T-cell (primary cell): ENCODE measurements at regions of chr2 and their contacts with region 1.

Region 1: GRCh38 chr2:25419678-25420242 is 78.0 kb upstream of the DNMT3A start:
- DNase-seq: peak in 1 of 35 experiments; percentile 11
- ATAC-seq: peak in 1 of 4 experiments; percentile 35
- H3K4me3 ChIP-seq: no peak overlapping the region
- H3K4me3 Mint-ChIP-seq: no peak overlapping the region
- H3K27ac ChIP-seq: no peak overlapping the region
- H3K27ac Mint-ChIP-seq: no peak overlapping the region
- H3K4me1 ChIP-seq: no peaks in the 10 kb centered on the region
- H3K4me1 Mint-ChIP-seq: peaks cover 3 to 17% (median 4%) of the 10 kb centered on the region in 3 donors
- H3K27me3 ChIP-seq: no peaks in the 10 kb centered on the region
- H3K27me3 Mint-ChIP-seq: no peaks in the 10 kb centered on the region

Region 2: GRCh38 chr2:25378731-25379490 is 40.8 kb before region 1 on chr2:
- CTCF ChIA-PET with region 1: no interaction called
- POLR2A ChIA-PET with region 1: no interaction called
- DNase-seq: no peak
- ATAC-seq: no peak
- H3K4me3 ChIP-seq: no peak overlapping the region
- H3K4me3 Mint-ChIP-seq: peak overlapping the region in 1 of 3 donors; percentile 25
- H3K27ac ChIP-seq: no peak overlapping the region
- H3K27ac Mint-ChIP-seq: peak overlapping the region in 1 of 2 donors; percentile 34
- H3K4me1 ChIP-seq: peaks cover 11 to 43% of the 10 kb centered on the region in 2 experiments
- H3K4me1 Mint-ChIP-seq: peaks cover 36 to 39% (median 38%) of the 10 kb centered on the region in 3 donors
- H3K27me3 ChIP-seq: no peaks in the 10 kb centered on the region
- H3K27me3 Mint-ChIP-seq: no peaks in the 10 kb centered on the region

Region 3: DNA sequence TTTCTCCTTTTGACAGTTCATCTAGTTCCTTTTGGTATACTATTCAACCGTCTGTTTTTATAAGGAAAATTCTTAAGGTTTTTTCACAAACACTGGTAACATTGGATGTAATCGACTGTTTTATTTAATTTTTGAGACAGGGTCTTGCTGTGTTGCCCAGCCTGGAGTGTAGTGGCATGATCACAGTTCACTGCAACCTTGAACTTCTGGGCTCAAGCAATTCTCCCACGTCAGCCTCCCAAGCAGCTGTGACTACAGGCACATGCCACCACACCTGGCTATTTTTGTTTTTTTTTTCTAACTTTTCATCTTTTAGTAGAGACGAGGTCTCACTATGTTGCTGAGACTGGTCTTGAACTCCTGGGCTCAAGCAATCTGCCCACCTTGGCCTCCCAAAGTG is 26.4 kb after region 1 on chr2:
- CTCF ChIA-PET with region 1: no interaction called
- POLR2A ChIA-PET with region 1: interaction called in 1 of 2 experiments, 13 read pairs
- DNase-seq: no peak
- ATAC-seq: no peak
- H3K4me3 ChIP-seq: no peak overlapping the region
- H3K4me3 Mint-ChIP-seq: no peak overlapping the region
- H3K27ac ChIP-seq: no peak overlapping the region
- H3K27ac Mint-ChIP-seq: no peak overlapping the region
- H3K4me1 ChIP-seq: no peaks in the 10 kb centered on the region
- H3K4me1 Mint-ChIP-seq: no peaks in the 10 kb centered on the region
- H3K27me3 ChIP-seq: no peaks in the 10 kb centered on the region
- H3K27me3 Mint-ChIP-seq: no peaks in the 10 kb centered on the region